ENCODE measurements at regions of chrX and their contacts with region 1.

Region 1: GRCh38 chrX:19334945-19335626 is 8.6 kb upstream of the PDHA1 start:
- DNase-seq: no peak
- H3K4me3 ChIP-seq: no peak overlapping the region
- H3K27ac ChIP-seq: no peak overlapping the region
- H3K4me1 ChIP-seq: no peaks in the 10 kb centered on the region
- H3K27me3 ChIP-seq: no peaks in the 10 kb centered on the region

Region 2: DNA sequence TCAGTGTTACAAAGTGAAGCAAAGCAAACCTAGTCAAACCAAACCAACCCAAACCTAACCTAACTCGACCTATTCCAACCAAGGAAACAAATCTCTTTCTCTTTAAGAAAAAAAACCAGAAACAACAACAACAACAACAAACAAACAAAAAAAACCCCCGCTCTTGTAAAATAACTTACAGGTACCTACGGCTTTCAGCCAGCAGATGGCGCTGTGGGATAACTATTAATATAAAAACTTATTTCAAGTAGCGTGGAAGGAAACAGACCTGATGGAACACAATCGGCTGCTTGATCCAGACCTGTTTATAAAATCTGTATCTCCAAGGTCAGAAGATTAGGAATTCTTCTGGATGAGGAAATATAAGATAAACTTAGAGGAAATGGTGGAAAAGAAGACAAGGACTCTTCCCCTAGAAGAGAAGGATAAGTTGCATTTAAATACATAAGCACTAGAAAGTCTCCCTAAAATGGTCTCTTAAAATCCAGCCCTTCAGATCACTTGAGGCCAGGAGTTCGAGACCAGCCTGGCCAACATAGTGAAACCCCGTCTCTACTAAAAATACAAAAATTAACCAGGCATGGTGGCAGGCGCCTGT is 944.0 kb before region 1 on chrX:
- in situ Hi-C with region 1: loop called (anchors 10 kb)
- DNase-seq: peak; percentile 60
- H3K4me3 ChIP-seq: no peak overlapping the region
- H3K27ac ChIP-seq: no peak overlapping the region
- H3K4me1 ChIP-seq: no peaks in the 10 kb centered on the region
- H3K27me3 ChIP-seq: no peaks in the 10 kb centered on the region

Region 3: GRCh38 chrX:18674788-18675735 is 660.0 kb before region 1 on chrX:
- in situ Hi-C with region 1: no loop called
- DNase-seq: peak; percentile 80
- H3K4me3 ChIP-seq: peak overlapping the region; percentile 87
- H3K27ac ChIP-seq: peak overlapping the region; percentile 52
- H3K4me1 ChIP-seq: no peaks in the 10 kb centered on the region
- H3K27me3 ChIP-seq: no peaks in the 10 kb centered on the region

Region 4: DNA sequence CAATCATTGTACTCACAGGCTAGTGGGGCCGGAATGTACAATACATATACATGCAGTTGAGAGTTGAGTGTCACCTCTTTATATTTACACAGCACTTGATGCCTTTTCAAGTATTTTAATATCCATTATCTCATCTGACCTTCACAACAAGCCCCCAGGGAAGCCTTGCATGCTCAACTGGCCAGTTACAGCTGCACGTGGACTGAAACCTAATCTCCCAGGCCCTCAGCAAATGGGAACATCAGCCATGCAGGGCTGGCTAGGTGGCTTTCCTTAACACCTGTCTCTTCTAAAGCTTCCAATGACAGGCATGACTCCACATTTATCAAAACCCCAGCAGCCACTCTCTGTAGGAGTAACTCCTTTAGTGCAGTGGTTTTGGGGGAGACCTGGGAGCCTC is 407.6 kb before region 1 on chrX:
- in situ Hi-C with region 1: loop called (anchors 10 kb)
- DNase-seq: no peak
- H3K4me3 ChIP-seq: no peak overlapping the region
- H3K27ac ChIP-seq: no peak overlapping the region
- H3K4me1 ChIP-seq: no peaks in the 10 kb centered on the region
- H3K27me3 ChIP-seq: no peaks in the 10 kb centered on the region

Region 5: DNA sequence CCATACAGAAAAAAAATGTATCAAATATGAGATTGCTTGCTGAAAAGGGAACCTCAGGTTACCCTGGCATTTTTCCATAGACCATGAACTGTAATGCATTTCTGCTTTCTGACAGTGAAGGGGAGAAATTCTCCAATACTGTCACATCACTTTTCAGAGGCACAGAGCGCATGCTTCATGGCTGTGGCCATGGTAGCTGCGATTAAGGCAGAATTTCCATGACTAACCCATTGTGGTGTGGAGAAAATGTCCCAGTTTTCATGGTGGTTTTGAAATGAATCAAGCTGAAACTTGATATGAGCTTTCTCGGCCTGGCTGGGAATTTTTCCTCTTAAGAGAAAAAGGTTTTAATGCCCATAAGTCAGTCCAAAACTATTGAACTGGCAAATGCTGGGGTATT is 219.7 kb after region 1 on chrX:
- in situ Hi-C with region 1: no loop called
- DNase-seq: peak; percentile 88
- H3K4me3 ChIP-seq: no peak overlapping the region
- H3K27ac ChIP-seq: peak overlapping the region; percentile 79
- H3K4me1 ChIP-seq: peaks cover 23% of the 10 kb centered on the region
- H3K27me3 ChIP-seq: no peaks in the 10 kb centered on the region